GM13976 (cell line): ENCODE measurements at regions of chr2 and their contacts with region 1.

Region 1: DNA sequence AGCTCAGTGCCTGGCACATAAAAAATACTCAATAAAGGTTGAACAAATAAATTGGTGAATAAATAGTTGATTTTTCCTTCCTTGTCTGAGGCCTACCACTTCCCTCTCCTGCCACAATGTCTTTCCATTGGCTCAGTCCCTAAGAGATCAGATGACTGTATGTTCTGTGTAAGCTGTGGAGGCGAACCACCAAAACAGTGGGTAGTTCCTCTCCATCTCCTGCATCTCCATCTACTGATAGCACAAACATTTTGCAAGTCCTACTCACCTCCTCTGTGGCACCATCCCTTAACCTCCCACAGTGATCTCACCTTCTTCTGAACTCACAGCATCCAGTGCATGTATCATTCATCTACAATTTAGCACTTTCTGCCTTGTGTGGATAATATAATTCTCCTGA is 50.2 kb downstream of the PCBP1 start:
- DNase-seq: no peak
- CTCF ChIP-seq: no peak

Region 2: DNA sequence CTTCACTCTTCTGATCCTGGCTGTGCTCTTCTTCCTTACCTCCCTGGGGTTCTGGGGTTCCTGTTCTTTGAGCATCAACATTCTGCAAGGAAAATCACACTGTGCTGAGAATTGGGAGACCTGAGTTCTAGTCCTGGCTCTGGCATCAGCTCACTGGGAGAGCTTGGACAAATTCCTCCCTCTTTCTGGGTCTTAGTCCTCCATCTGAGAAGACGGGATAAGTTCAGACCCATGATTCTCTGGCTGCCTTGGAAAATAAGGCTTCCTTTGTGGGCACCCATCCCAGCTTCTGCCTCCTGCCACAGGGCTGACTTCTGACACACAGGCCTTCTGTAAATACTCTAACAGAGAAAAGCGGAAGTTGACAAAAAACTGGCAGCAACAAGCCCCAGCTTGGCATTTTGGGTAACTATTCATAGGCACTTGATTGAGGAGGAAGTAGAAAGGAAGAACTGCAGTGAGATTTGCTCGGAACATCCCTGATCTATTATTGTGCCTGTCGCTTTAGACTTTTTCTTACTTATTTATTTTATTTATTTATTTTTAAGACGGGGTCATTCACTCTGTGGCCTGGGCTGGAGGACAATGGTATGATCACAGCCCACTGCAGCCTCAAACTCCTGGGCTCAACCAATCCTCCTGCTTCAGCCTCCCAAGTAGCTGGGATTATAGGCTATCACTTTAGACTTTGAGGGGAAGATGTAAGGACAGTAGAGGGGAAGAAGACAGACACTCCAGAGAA is 42.4 kb before region 1 on chr2:
- in situ Hi-C with region 1: loop called (anchors 5 kb)
- DNase-seq: peak; percentile 61
- CTCF ChIP-seq: no peak